Calu3 (cell line): ENCODE measurements at regions of chr17 and their contacts with region 1.

Region 1: GRCh38 chr17:40803617-40804082 is 3.9 kb upstream of the KRT28 start:
- DNase-seq: peak; percentile 100
- H3K4me3 Mint-ChIP-seq: no peak overlapping the region
- H3K27ac Mint-ChIP-seq: no peak overlapping the region
- H3K4me1 Mint-ChIP-seq: no peaks in the 10 kb centered on the region
- H3K27me3 Mint-ChIP-seq: peaks cover 38% of the 10 kb centered on the region
- CTCF ChIP-seq: peak; percentile 100

Region 2: DNA sequence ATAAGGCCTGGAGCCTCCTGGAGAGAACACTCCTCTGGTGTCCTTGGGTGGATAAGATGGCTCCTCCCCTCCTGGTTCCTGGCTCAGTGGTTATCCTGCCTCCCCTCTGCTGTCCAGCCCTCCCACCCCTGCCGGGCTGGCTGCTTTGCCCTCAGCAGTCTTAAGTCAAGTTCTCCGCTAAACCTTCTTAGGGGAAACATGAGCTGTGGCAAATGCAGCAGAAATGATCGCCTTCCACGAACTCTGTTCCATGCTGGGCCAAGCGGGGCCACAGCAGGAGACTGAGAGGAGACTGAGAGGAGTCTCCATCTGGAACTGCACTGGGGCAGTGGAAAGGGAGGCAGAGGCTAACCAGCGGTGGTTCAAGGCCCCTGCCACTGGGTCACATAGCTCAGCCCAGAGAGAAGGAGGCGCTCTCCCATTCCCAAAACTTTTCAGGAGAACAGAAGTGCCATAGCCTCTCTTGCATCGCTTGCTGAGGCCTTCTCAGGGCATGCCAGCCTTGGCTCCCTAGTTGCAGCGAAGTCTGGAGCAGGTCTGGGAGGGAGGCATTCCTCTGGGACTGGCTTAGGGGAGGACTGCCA is 329.1 kb before region 1 on chr17:
- CTCF ChIA-PET with region 1: interaction called, 3 read pairs
- intact Hi-C with region 1: loop called (anchors 5 kb)
- DNase-seq: no peak
- H3K4me3 Mint-ChIP-seq: no peak overlapping the region
- H3K27ac Mint-ChIP-seq: no peak overlapping the region
- H3K4me1 Mint-ChIP-seq: no peaks in the 10 kb centered on the region
- H3K27me3 Mint-ChIP-seq: peaks cover 65% of the 10 kb centered on the region
- CTCF ChIP-seq: no peak

Region 3: DNA sequence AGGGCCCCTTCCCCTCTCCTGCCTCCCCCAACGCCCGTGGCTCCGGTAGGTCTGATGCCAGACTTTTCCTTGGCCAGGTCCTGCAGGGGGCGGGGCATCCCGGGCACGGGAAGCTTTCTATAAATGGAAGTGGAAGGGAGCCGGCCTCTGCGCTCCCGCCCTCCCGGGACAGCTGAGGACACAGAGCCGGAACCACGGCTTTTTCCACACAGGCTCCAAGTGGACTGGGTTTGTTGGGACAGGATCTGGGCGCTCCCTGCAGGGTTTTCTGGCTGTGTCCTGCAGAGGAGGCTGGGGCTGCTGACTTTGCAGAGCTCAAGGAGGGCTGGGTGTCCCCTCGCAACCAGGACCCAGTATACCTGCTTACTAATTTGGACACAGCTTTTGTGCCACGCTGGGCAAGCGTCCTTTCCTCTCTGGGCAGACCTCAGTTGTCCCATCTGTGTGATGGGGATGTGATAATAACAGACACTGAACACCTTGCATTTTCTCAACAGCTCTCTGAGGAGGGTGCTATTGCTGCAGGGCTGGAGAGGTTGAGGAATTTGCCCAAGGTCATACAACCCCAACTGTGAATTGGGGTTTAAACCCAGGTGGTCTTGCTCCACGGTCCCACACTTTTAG is 304.0 kb before region 1 on chr17:
- CTCF ChIA-PET with region 1: no interaction called
- intact Hi-C with region 1: no loop called
- DNase-seq: peak; percentile 100
- H3K4me3 Mint-ChIP-seq: peak overlapping the region; percentile 33
- H3K27ac Mint-ChIP-seq: no peak overlapping the region
- H3K4me1 Mint-ChIP-seq: peaks cover 20% of the 10 kb centered on the region
- H3K27me3 Mint-ChIP-seq: peaks cover 82% of the 10 kb centered on the region
- CTCF ChIP-seq: no peak

Region 4: GRCh38 chr17:40818733-40819527 is 15.3 kb after region 1 on chr17:
- CTCF ChIA-PET with region 1: interaction called, 19 read pairs
- intact Hi-C with region 1: no loop called
- DNase-seq: peak; percentile 100
- H3K4me3 Mint-ChIP-seq: peak overlapping the region; percentile 80
- H3K27ac Mint-ChIP-seq: peak overlapping the region; percentile 92
- H3K4me1 Mint-ChIP-seq: peaks cover 31% of the 10 kb centered on the region
- H3K27me3 Mint-ChIP-seq: no peaks in the 10 kb centered on the region
- CTCF ChIP-seq: no peak

Region 5: GRCh38 chr17:40909351-40909750 is 105.7 kb after region 1 on chr17:
- CTCF ChIA-PET with region 1: interaction called, 6 read pairs
- intact Hi-C with region 1: loop called (anchors 1 kb)
- DNase-seq: peak; percentile 99
- H3K4me3 Mint-ChIP-seq: no peak overlapping the region
- H3K27ac Mint-ChIP-seq: peak overlapping the region; percentile 86
- H3K4me1 Mint-ChIP-seq: peaks cover 94% of the 10 kb centered on the region
- H3K27me3 Mint-ChIP-seq: no peaks in the 10 kb centered on the region
- CTCF ChIP-seq: peak; percentile 98

Region 6: DNA sequence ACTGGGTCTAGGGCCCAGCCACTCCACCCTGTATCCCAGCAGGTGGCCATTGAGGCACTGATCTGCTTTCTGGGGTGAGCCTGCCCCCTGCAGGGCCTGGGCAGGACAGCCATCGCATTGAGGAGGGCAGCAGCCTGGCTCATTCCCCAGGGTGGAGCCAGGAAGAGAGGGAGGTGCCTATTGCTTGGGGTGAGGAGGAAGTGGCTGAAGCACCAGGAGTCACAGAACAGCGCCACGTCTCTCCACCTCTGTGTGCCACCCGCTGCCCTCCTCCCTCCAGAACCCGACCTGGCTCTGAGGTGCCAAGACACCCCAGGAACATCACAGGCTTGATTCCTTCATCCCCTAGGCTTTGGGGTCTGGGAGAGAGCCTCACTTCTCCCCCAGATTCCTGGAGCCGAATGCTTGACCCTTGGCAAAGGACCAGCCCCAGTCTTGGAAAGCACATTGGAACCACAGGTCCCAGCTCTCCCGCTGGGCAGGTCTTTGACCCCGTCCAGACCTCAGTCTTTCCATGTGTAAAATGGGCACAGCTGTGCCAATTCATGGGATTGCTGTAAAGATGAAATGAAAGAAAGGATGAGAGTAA is 693.3 kb after region 1 on chr17:
- CTCF ChIA-PET with region 1: no interaction called
- intact Hi-C with region 1: loop called (anchors 5 kb)
- DNase-seq: peak; percentile 97
- H3K4me3 Mint-ChIP-seq: no peak overlapping the region
- H3K27ac Mint-ChIP-seq: peak overlapping the region; percentile 40
- H3K4me1 Mint-ChIP-seq: peaks cover 77% of the 10 kb centered on the region
- H3K27me3 Mint-ChIP-seq: no peaks in the 10 kb centered on the region
- CTCF ChIP-seq: peak; percentile 96